ENCODE measurements at regions of chr19 and their contacts with region 1.

Region 1: GRCh38 chr19:10000171-10000826 is 10.0 kb downstream of the COL5A3 start:
- DNase-seq: peak in 1 of 2 donors; percentile 80
- H3K4me3 ChIP-seq: no peak overlapping the region
- H3K27ac ChIP-seq: no peak overlapping the region
- H3K4me1 ChIP-seq: no peaks in the 10 kb centered on the region
- H3K27me3 ChIP-seq: no peaks in the 10 kb centered on the region
- CTCF ChIP-seq: peak; percentile 50 to 74 (median 67)

Region 2: DNA sequence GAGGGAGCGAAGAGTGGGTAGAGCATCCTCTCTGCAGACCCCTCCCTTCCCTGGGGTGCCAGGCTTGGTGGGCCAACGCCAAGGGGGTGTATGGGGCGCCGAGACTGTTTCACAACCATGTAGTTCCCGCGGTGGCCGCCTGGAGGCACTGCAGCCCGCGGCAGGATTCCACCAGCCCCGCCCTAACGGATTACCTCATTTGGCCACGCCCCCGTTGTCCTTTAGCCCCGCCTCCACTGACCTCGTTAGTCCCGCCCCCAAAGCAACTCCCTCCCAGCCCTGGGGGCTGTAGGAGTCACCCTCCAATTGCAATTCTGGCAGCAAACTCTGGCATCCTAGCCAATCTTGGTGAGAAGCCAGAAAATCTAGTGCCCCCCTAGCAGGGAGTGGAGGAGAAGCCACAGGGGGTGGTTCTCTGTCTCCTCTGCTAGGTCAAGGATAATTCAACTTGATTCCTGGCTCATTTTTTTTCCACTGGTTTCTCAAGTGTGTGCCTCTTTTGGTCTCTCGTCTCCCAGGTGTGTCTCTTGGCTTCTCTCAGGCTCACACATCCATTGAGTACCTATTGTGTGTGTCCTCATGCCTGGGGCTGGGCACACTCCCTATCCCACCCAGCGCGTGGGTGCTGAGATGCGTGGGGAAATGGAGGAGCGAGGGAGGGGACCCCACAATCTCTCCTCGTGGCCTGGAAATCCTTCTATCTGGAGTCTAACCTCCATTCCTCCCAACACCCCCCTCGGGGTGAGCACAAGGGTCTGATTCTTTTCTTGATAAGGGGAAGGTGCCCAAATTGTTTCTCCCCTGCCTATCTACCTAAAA is 66.0 kb before region 1 on chr19:
- intact Hi-C with region 1: loop called (anchors 1 kb)
- DNase-seq: peak in 1 of 2 donors; percentile 77
- H3K4me3 ChIP-seq: no peak overlapping the region
- H3K27ac ChIP-seq: no peak overlapping the region
- H3K4me1 ChIP-seq: peaks cover 2 to 11% of the 10 kb centered on the region in 2 donors
- H3K27me3 ChIP-seq: peaks cover 9% of the 10 kb centered on the region
- CTCF ChIP-seq: peak; percentile 79 to 81 (median 79)

Region 3: DNA sequence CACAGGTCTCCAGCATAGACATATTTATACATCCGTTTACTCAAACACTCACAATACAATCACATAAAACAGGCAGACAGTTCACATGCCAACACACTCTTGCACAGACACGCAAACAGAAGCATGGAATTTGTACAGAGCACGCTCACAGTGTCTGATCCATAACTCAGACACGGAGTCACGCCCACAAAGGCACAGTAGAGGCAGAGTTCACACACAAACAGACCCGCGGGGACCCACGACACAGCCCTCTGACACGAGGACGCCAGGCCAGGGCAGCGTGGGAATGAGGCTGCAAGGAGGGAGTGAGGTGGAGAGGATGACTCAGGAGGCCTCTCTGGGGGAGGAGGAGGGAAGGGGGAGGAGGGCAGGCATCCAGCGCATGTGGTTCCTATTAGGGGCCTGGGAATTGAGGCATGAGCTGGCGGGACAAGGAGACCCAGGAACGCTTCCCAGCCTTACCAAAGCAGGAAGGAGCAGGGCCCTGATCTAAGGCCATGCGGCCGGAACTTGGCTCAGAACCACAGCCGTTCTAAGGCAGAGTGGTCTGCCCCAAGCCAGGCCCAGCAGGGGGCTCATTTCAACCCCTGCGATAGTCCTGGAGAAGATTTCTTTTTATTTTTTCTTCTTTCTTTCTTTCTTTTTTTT is 54.9 kb before region 1 on chr19:
- intact Hi-C with region 1: no loop called
- DNase-seq: peak; percentile 75 to 95
- H3K4me3 ChIP-seq: peak overlapping the region; percentile 26 to 35
- H3K27ac ChIP-seq: peak overlapping the region; percentile 83 to 84
- H3K4me1 ChIP-seq: peaks cover 3 to 19% of the 10 kb centered on the region in 2 donors
- H3K27me3 ChIP-seq: no peaks in the 10 kb centered on the region
- CTCF ChIP-seq: no peak